CD14-positive monocyte (primary cell): ENCODE measurements at regions of chr17 and their contacts with region 1.

Region 1: GRCh38 chr17:59155439-59156182 is at the start of gene PRR11:
- DNase-seq: peak; percentile 99 to 100 (median 100)
- H3K4me3 ChIP-seq: peak within 1 kb of the TSS; percentile 86 to 100 (median 99)
- H3K4me3 Mint-ChIP-seq: no peak within 1 kb of the TSS
- H3K27ac ChIP-seq: peak within 1 kb of the TSS; percentile 51 to 76
- H3K27ac Mint-ChIP-seq: no peak within 1 kb of the TSS
- H3K4me1 ChIP-seq: peaks cover 25 to 41% of the 10 kb centered on the region in 2 donors
- H3K4me1 Mint-ChIP-seq: peaks cover 43% of the 10 kb centered on the region
- H3K27me3 ChIP-seq: no peaks in the 10 kb centered on the region
- H3K27me3 Mint-ChIP-seq: no peaks in the 10 kb centered on the region
- CTCF ChIP-seq: no peak
- polyA plus RNA-seq, gene PRR11: 1.1 to 3.9 (median 1.7) TPM

Region 2: GRCh38 chr17:59067756-59068155 is 87.9 kb before region 1 on chr17:
- intact Hi-C with region 1: no loop called
- DNase-seq: no peak
- H3K4me3 ChIP-seq: no peak overlapping the region
- H3K4me3 Mint-ChIP-seq: no peak overlapping the region
- H3K27ac ChIP-seq: no peak overlapping the region
- H3K27ac Mint-ChIP-seq: no peak overlapping the region
- H3K4me1 ChIP-seq: no peaks in the 10 kb centered on the region
- H3K4me1 Mint-ChIP-seq: no peaks in the 10 kb centered on the region
- H3K27me3 ChIP-seq: no peaks in the 10 kb centered on the region
- H3K27me3 Mint-ChIP-seq: no peaks in the 10 kb centered on the region
- CTCF ChIP-seq: no peak

Region 3: GRCh38 chr17:59106463-59107305 is 48.9 kb before region 1 on chr17 and contains the start of gene TRIM37:
- intact Hi-C with region 1: loop called (anchors 2 kb)
- DNase-seq: peak; percentile 99 to 100 (median 99)
- H3K4me3 ChIP-seq: peak within 1 kb of the TSS; percentile 76 to 94 (median 90)
- H3K4me3 Mint-ChIP-seq: peak within 1 kb of the TSS; percentile 91 to 95
- H3K27ac ChIP-seq: peak within 1 kb of the TSS; percentile 87 to 90
- H3K27ac Mint-ChIP-seq: peak within 1 kb of the TSS; percentile 84 to 94 (median 92)
- H3K4me1 ChIP-seq: peaks cover 14 to 23% of the 10 kb centered on the region in 2 donors
- H3K4me1 Mint-ChIP-seq: peaks cover 20% of the 10 kb centered on the region
- H3K27me3 ChIP-seq: no peaks in the 10 kb centered on the region
- H3K27me3 Mint-ChIP-seq: no peaks in the 10 kb centered on the region
- CTCF ChIP-seq: peak; percentile 11
- polyA plus RNA-seq, gene TRIM37: 2.7 to 6.1 (median 5.3) TPM

Region 4: GRCh38 chr17:59220376-59221158 is 65.0 kb after region 1 on chr17 and contains the start of gene GDPD1:
- intact Hi-C with region 1: loop called in 1 of 2 experiments (anchors 10 kb)
- DNase-seq: peak; percentile 92 to 96 (median 95)
- H3K4me3 ChIP-seq: peak within 1 kb of the TSS; percentile 77 to 94 (median 89)
- H3K4me3 Mint-ChIP-seq: peak within 1 kb of the TSS; percentile 99 to 100
- H3K27ac ChIP-seq: peak within 1 kb of the TSS in 1 of 2 donors; percentile 56
- H3K27ac Mint-ChIP-seq: peak within 1 kb of the TSS in 6 of 7 donors; percentile 6 to 91 (median 68)
- H3K4me1 ChIP-seq: peaks cover 13 to 20% of the 10 kb centered on the region in 2 donors
- H3K4me1 Mint-ChIP-seq: peaks cover 11% of the 10 kb centered on the region
- H3K27me3 ChIP-seq: no peaks in the 10 kb centered on the region
- H3K27me3 Mint-ChIP-seq: peaks cover 0 to 2% (median 0%) of the 10 kb centered on the region in 3 donors
- CTCF ChIP-seq: peak; percentile 71
- polyA plus RNA-seq, gene GDPD1: 0.50 to 1.6 (median 1.6) TPM